Naive thymus-derived CD4-positive, alpha-beta T cell (primary cell): ENCODE measurements at regions of chr6 and their contacts with region 1.

Region 1: DNA sequence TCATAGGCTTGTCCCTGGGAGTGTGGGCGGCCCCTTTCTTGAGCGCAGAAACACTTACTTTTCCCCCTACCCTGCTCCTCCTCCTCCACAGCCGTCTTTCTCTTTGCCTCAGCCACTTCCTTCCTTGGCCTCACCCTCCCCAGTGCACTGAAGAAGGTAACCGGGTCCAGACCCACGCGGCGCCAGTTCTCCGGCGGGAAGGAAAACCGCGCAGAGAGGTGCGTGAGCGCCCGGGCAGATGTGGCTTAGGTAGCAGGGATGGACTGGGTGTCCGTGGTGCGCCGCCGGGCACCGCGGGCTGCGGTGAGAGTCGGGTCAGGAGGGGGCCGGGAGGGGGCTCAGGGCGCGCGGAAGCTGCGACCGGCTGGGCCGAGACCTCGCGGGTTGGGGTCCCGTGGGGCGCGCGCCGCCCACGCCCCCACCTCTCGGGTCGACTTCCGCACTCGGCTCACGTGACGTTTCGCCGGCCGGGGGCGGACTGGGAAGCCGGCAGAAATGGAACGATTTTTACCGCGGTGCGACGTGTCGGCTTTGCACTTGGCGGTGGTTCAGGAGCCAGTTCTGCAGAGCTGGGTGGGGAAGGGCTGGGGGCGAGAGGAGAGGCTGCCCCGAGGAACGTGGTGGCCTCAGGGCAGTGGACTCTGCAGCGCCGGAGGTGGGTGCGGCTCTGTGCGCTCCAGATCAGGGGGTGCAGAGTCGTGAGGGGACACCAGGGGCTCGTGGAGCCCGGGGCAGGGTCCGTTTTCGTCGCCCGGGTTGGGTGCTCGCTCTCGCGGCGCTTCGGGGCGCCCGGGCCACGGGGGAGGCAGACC is at the start of gene ABRACL:
- DNase-seq: peak; percentile 44 to 87 (median 81)
- ATAC-seq: peak; percentile 88
- H3K4me3 ChIP-seq: peak within 1 kb of the TSS; percentile 72
- H3K4me3 Mint-ChIP-seq: peak within 1 kb of the TSS in 6 of 10 donors; percentile 88 to 98 (median 94)
- H3K27ac ChIP-seq: peak within 1 kb of the TSS; percentile 88
- H3K27ac Mint-ChIP-seq: peak within 1 kb of the TSS in 8 of 9 donors; percentile 58 to 97 (median 94)
- H3K4me1 ChIP-seq: peaks cover 3 to 18% of the 10 kb centered on the region in 2 donors
- H3K4me1 Mint-ChIP-seq: peaks cover 13 to 35% (median 24%) of the 10 kb centered on the region in 7 donors
- H3K27me3 ChIP-seq: no peaks in the 10 kb centered on the region
- H3K27me3 Mint-ChIP-seq: no peaks in the 10 kb centered on the region
- total RNA-seq, gene ABRACL: 39.5 to 137 (median 107) TPM

Region 2: GRCh38 chr6:138109042-138109997 is 919.5 kb before region 1 on chr6:
- CTCF ChIA-PET with region 1: no interaction called
- POLR2A ChIA-PET with region 1: no interaction called
- intact Hi-C with region 1: loop called in 1 of 2 experiments (anchors 5 kb)
- DNase-seq: peak; percentile 47 to 77 (median 68)
- ATAC-seq: peak; percentile 84
- H3K4me3 ChIP-seq: no peak overlapping the region
- H3K4me3 Mint-ChIP-seq: peak overlapping the region in 4 of 10 donors; percentile 2 to 45 (median 7)
- H3K27ac ChIP-seq: no peak overlapping the region
- H3K27ac Mint-ChIP-seq: no peak overlapping the region
- H3K4me1 ChIP-seq: peaks cover 8 to 10% of the 10 kb centered on the region in 2 donors
- H3K4me1 Mint-ChIP-seq: peaks cover 14 to 27% (median 20%) of the 10 kb centered on the region in 7 donors
- H3K27me3 ChIP-seq: peaks cover 0 to 6% of the 10 kb centered on the region in 2 donors
- H3K27me3 Mint-ChIP-seq: peaks cover 34 to 56% (median 47%) of the 10 kb centered on the region in 5 donors

Region 3: DNA sequence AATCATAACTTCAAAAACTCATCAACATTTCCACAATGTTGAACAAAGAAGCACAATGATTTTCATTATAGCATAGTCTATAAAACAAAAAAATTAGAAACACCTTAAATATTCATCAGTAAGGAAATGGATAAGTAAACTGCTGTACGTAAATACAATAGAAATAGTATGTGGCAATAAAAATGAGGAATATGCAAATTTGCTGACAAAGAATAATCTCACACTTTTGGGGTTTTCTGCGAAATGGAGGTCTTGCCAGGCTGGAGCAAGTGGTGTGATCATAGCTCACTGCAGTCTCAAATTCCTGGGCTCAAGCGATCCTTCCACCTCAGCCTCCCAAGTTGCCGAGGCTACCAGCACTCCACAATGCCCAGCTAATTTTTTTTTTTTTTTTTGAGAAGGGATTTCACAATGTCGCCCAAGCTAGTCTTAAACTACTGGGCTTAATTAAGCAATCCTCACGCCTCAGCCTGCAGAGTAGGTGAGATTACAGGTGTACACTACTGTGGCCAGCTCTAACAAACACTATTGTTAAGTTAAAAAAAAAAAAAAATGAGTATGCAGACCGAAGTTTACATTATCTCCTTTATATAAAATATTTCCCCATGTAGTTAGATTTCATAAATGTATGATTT is 710.0 kb before region 1 on chr6:
- CTCF ChIA-PET with region 1: no interaction called
- POLR2A ChIA-PET with region 1: no interaction called
- intact Hi-C with region 1: no loop called
- DNase-seq: no peak
- ATAC-seq: no peak
- H3K4me3 ChIP-seq: no peak overlapping the region
- H3K4me3 Mint-ChIP-seq: no peak overlapping the region
- H3K27ac ChIP-seq: no peak overlapping the region
- H3K27ac Mint-ChIP-seq: no peak overlapping the region
- H3K4me1 ChIP-seq: no peaks in the 10 kb centered on the region
- H3K4me1 Mint-ChIP-seq: no peaks in the 10 kb centered on the region
- H3K27me3 ChIP-seq: no peaks in the 10 kb centered on the region
- H3K27me3 Mint-ChIP-seq: peaks cover 9 to 31% (median 23%) of the 10 kb centered on the region in 5 donors

Region 4: DNA sequence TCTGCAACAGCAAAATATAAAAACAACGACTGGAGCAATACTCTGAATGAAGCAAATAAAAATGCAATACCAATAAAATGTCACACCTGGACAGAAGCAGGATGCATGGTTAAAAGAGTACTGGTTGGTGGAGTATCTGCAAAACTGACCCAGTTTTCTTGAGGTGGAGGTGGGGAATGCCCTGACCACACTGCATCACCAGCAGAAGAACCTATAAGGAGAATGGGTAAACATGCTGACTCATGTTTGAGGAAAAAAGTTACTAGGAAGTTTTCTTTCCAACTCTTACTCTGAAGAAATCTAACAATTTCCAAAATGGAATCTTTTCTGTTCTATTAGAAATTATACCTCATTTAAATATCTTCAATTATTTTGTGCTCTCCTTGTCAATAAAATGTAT is 84.5 kb before region 1 on chr6:
- CTCF ChIA-PET with region 1: no interaction called
- POLR2A ChIA-PET with region 1: no interaction called
- intact Hi-C with region 1: loop called in 1 of 2 experiments (anchors 2 kb)
- DNase-seq: peak in 1 of 9 donors; percentile 35
- ATAC-seq: peak; percentile 64
- H3K4me3 ChIP-seq: no peak overlapping the region
- H3K4me3 Mint-ChIP-seq: no peak overlapping the region
- H3K27ac ChIP-seq: no peak overlapping the region
- H3K27ac Mint-ChIP-seq: no peak overlapping the region
- H3K4me1 ChIP-seq: peaks cover 9 to 10% of the 10 kb centered on the region in 2 donors
- H3K4me1 Mint-ChIP-seq: peaks cover 23 to 46% (median 32%) of the 10 kb centered on the region in 7 donors
- H3K27me3 ChIP-seq: no peaks in the 10 kb centered on the region
- H3K27me3 Mint-ChIP-seq: no peaks in the 10 kb centered on the region

Region 5: DNA sequence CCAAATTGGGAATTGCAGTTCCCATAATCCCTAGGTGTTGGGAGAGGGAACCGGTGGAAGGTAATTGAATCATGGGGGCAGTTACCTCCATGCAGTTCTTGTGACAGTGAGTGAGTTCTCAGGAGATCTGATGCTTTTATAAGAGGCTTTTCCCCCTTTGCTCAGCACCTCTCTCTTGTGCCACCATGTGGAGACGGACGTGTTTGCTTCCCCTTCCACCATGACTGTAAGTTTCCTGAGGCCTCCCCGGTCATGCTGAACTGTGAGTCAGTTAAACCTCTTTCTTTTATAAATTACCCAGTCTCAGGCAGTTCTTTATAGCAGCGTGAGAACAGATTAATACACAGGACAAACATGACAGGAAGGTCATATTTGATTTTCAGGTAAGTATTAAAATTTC is 80.7 kb after region 1 on chr6:
- CTCF ChIA-PET with region 1: interaction called, 5 read pairs
- POLR2A ChIA-PET with region 1: interaction called, 11 read pairs
- intact Hi-C with region 1: loop called (anchors 1 kb)
- DNase-seq: peak in 2 of 9 donors; percentile 21 to 28
- ATAC-seq: no peak
- H3K4me3 ChIP-seq: no peak overlapping the region
- H3K4me3 Mint-ChIP-seq: peak overlapping the region in 2 of 10 donors; percentile 6 to 36
- H3K27ac ChIP-seq: no peak overlapping the region
- H3K27ac Mint-ChIP-seq: peak overlapping the region in 8 of 9 donors; percentile 38 to 94 (median 86)
- H3K4me1 ChIP-seq: peaks cover 36 to 48% of the 10 kb centered on the region in 2 donors
- H3K4me1 Mint-ChIP-seq: peaks cover 17 to 74% (median 59%) of the 10 kb centered on the region in 7 donors
- H3K27me3 ChIP-seq: no peaks in the 10 kb centered on the region
- H3K27me3 Mint-ChIP-seq: no peaks in the 10 kb centered on the region

Region 6: DNA sequence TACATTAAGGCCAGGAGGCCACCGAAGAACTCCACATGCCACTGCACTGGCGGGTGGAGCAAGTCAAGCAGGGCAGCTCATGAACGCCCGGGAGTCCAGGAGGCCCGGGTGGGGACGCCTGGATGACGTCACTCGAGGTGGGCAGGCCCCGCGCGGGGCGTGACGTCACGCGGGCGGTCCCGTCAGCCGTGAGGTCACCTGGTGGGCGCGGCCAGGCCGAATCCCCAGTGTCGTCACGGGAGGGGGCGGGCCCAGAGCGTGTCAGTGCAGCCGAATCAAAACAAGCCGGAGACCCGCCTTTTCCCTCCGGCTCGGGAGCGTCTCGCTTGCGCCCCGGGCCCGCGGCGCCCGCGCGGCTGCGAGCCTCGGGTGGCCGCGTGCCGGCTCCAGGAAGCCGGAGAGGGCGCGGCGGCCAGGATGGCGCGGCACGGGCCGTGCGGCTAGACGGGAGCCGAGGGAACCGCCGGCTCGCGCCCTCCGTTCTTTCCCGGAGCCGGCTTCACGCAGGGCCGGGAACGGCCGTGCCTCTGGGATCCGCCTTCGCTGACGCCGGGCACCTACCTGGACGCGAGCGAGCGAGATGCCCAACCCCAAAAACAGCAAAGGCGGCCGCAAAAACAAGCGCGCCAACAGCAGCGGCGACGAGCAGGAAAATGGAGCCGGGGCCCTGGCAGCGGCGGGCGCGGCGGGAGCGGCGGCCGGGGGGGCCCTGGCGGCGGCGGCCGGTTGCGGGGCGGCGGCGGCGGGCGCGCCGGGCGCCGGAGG is 106.1 kb after region 1 on chr6 and contains the start of gene HECA:
- CTCF ChIA-PET with region 1: interaction called, 3 read pairs
- POLR2A ChIA-PET with region 1: interaction called, 9 read pairs
- intact Hi-C with region 1: loop called (anchors 1 kb)
- DNase-seq: peak; percentile 99 to 100 (median 99)
- ATAC-seq: peak; percentile 91
- H3K4me3 ChIP-seq: peak within 1 kb of the TSS; percentile 93
- H3K4me3 Mint-ChIP-seq: peak within 1 kb of the TSS; percentile 84 to 99 (median 93)
- H3K27ac ChIP-seq: peak within 1 kb of the TSS; percentile 100
- H3K27ac Mint-ChIP-seq: peak within 1 kb of the TSS; percentile 95 to 100 (median 99)
- H3K4me1 ChIP-seq: peaks cover 21 to 43% of the 10 kb centered on the region in 2 donors
- H3K4me1 Mint-ChIP-seq: peaks cover 51 to 77% (median 66%) of the 10 kb centered on the region in 7 donors
- H3K27me3 ChIP-seq: no peaks in the 10 kb centered on the region
- H3K27me3 Mint-ChIP-seq: peaks cover 0 to 2% (median 0%) of the 10 kb centered on the region in 5 donors
- total RNA-seq, gene HECA: 54.1 to 145 (median 130) TPM

Region 7: GRCh38 chr6:139250296-139251044 is 221.6 kb after region 1 on chr6:
- CTCF ChIA-PET with region 1: no interaction called
- POLR2A ChIA-PET with region 1: no interaction called
- intact Hi-C with region 1: loop called in 1 of 2 experiments (anchors 5 kb)
- DNase-seq: peak; percentile 7 to 45 (median 34)
- ATAC-seq: peak; percentile 90
- H3K4me3 ChIP-seq: no peak overlapping the region
- H3K4me3 Mint-ChIP-seq: peak overlapping the region in 6 of 10 donors; percentile 16 to 85 (median 58)
- H3K27ac ChIP-seq: no peak overlapping the region
- H3K27ac Mint-ChIP-seq: peak overlapping the region; percentile 32 to 97 (median 73)
- H3K4me1 ChIP-seq: peaks cover 21 to 23% of the 10 kb centered on the region in 2 donors
- H3K4me1 Mint-ChIP-seq: peaks cover 23 to 48% (median 46%) of the 10 kb centered on the region in 7 donors
- H3K27me3 ChIP-seq: no peaks in the 10 kb centered on the region
- H3K27me3 Mint-ChIP-seq: no peaks in the 10 kb centered on the region